CD8-positive, alpha-beta T cell (primary cell): ENCODE measurements at regions of chrX and their contacts with region 1.

Region 1: DNA sequence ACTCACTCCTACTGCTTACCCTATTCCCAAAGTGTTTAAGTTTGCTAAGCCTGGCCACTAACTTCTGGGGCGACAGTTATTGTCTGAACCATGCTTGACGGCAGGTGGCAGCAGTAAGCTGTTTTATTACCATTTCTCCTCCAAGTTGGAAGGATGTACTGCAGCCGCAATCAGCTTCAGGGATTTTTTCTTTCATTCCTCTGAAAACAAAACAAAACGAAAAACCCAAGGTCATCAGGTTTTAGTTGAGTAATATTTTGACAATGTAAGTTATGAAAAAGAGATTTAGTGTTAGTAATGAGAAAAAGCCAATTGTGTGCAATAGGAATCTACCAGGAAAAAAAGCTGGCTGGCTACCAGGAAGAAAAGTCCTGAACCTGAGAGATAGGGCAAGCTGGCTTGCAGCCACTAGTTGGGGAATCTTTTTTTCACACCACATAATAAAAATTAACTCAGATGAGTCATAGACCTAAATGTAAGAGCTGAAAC is 13.2 kb upstream of the RAB9B start:
- DNase-seq: peak in 7 of 9 experiments; percentile 20 to 62 (median 46)
- ATAC-seq: no peak
- H3K4me3 ChIP-seq: no peak overlapping the region
- H3K4me3 Mint-ChIP-seq: no peak overlapping the region
- H3K27ac ChIP-seq: no peak overlapping the region
- H3K27ac Mint-ChIP-seq: no peak overlapping the region
- H3K4me1 ChIP-seq: no peaks in the 10 kb centered on the region
- H3K4me1 Mint-ChIP-seq: no peaks in the 10 kb centered on the region
- H3K27me3 ChIP-seq: no peaks in the 10 kb centered on the region
- H3K27me3 Mint-ChIP-seq: peaks cover 5% of the 10 kb centered on the region
- CTCF ChIP-seq: peak; percentile 52

Region 2: GRCh38 chrX:103864886-103865534 is 19.8 kb after region 1 on chrX:
- CTCF ChIA-PET with region 1: no interaction called
- POLR2A ChIA-PET with region 1: no interaction called
- intact Hi-C with region 1: no loop called
- DNase-seq: no peak
- ATAC-seq: no peak
- H3K4me3 ChIP-seq: no peak overlapping the region
- H3K4me3 Mint-ChIP-seq: no peak overlapping the region
- H3K27ac ChIP-seq: no peak overlapping the region
- H3K27ac Mint-ChIP-seq: no peak overlapping the region
- H3K4me1 ChIP-seq: no peaks in the 10 kb centered on the region
- H3K4me1 Mint-ChIP-seq: no peaks in the 10 kb centered on the region
- H3K27me3 ChIP-seq: no peaks in the 10 kb centered on the region
- H3K27me3 Mint-ChIP-seq: no peaks in the 10 kb centered on the region
- CTCF ChIP-seq: no peak

Region 3: GRCh38 chrX:103918581-103919269 is 73.5 kb after region 1 on chrX:
- CTCF ChIA-PET with region 1: interaction called, 10 read pairs
- POLR2A ChIA-PET with region 1: no interaction called
- intact Hi-C with region 1: no loop called
- DNase-seq: peak; percentile 5 to 77 (median 48)
- ATAC-seq: peak; percentile 74
- H3K4me3 ChIP-seq: peak overlapping the region; percentile 62 to 71
- H3K4me3 Mint-ChIP-seq: peak overlapping the region; percentile 90
- H3K27ac ChIP-seq: peak overlapping the region; percentile 65 to 76
- H3K27ac Mint-ChIP-seq: peak overlapping the region; percentile 90
- H3K4me1 ChIP-seq: peaks cover 12% of the 10 kb centered on the region
- H3K4me1 Mint-ChIP-seq: peaks cover 29% of the 10 kb centered on the region
- H3K27me3 ChIP-seq: no peaks in the 10 kb centered on the region
- H3K27me3 Mint-ChIP-seq: no peaks in the 10 kb centered on the region
- CTCF ChIP-seq: no peak

Region 4: DNA sequence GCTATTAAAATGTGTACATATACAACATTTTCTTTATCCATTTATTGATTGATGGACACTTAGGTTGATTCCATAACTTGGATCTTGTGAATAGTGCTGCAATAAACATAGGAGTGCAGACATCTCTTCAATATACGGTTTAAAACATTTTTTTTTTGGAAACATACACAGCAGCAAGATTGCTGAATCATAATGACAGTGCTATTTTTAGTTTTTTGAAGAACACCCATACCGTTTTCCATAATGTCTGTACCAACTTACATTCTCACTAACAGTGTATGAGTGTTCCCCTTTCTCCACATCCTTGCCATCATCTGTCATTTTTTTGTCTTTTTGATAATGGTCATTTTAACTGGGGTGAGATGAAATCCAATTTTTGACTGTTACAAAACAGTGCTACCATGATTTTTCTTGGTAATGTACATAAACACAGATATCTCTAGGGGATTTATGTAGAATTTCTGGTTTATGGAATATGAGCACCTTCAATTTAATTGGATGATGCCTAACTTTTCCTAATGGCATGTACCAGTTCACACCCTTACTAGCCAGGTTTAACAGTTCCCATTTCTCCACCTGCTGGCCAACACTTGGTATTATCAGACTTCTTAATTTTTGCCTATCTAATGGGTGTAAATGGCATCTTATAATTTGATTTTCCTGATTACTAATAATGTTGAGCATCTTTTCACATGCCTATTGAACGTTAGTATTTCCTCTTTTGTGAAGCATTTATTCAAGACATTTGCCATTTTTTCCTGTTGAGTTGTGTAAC is 96.2 kb after region 1 on chrX:
- CTCF ChIA-PET with region 1: interaction called, 29 read pairs
- POLR2A ChIA-PET with region 1: no interaction called
- intact Hi-C with region 1: loop called (anchors 1 kb)
- DNase-seq: peak in 2 of 9 experiments; percentile 52 to 63
- ATAC-seq: no peak
- H3K4me3 ChIP-seq: no peak overlapping the region
- H3K4me3 Mint-ChIP-seq: no peak overlapping the region
- H3K27ac ChIP-seq: no peak overlapping the region
- H3K27ac Mint-ChIP-seq: no peak overlapping the region
- H3K4me1 ChIP-seq: peaks cover 10% of the 10 kb centered on the region
- H3K4me1 Mint-ChIP-seq: peaks cover 20% of the 10 kb centered on the region
- H3K27me3 ChIP-seq: no peaks in the 10 kb centered on the region
- H3K27me3 Mint-ChIP-seq: no peaks in the 10 kb centered on the region
- CTCF ChIP-seq: peak; percentile 39

Region 5: DNA sequence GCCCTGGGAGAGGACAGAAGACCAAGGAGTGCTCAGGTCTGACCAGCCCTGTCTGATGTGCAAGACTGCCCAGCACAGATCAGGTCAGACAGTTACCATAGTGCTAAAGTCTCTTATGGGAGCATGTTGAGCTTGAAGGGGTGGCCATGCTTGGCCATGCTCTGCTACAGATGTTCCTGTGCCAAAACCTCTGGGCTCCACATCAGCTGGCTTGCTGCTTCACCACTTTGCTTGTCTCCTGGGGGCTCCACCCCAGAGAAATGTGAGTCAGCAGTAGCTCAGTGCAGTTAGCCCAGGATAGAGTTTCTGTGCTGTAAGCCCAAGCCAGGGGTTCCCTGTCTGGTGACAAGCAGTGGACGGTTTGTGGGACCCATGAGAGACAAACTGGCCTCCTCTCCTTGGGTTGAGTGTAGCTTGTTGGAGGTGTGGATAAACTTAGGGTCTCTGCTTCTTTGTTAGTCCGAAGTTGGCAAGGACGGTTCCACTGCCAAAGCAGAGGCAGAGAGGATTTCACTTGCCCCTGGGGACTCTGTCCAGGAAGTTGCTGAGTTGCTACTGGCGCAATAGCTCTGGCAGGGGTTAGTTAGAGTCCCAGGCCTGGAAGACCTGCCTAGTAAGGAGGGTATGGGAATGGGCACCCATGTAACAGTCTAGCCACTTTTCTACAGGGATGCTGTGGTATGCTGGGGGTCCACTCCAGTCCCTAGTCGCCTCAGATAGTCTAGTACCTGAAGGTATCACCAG is 239.5 kb after region 1 on chrX:
- CTCF ChIA-PET with region 1: no interaction called
- POLR2A ChIA-PET with region 1: no interaction called
- intact Hi-C with region 1: no loop called
- DNase-seq: no peak
- ATAC-seq: no peak
- H3K4me3 ChIP-seq: no peak overlapping the region
- H3K4me3 Mint-ChIP-seq: no peak overlapping the region
- H3K27ac ChIP-seq: no peak overlapping the region
- H3K27ac Mint-ChIP-seq: no peak overlapping the region
- H3K4me1 ChIP-seq: no peaks in the 10 kb centered on the region
- H3K4me1 Mint-ChIP-seq: no peaks in the 10 kb centered on the region
- H3K27me3 ChIP-seq: no peaks in the 10 kb centered on the region
- H3K27me3 Mint-ChIP-seq: peaks cover 3% of the 10 kb centered on the region
- CTCF ChIP-seq: no peak

Region 6: GRCh38 chrX:104136241-104137019 is 291.2 kb after region 1 on chrX:
- CTCF ChIA-PET with region 1: interaction called, 3 read pairs
- POLR2A ChIA-PET with region 1: no interaction called
- intact Hi-C with region 1: loop called (anchors 1 to 2 kb)
- DNase-seq: peak in 8 of 9 experiments; percentile 32 to 82 (median 62)
- ATAC-seq: peak; percentile 70
- H3K4me3 ChIP-seq: no peak overlapping the region
- H3K4me3 Mint-ChIP-seq: peak overlapping the region; percentile 22
- H3K27ac ChIP-seq: no peak overlapping the region
- H3K27ac Mint-ChIP-seq: no peak overlapping the region
- H3K4me1 ChIP-seq: peaks cover 13% of the 10 kb centered on the region
- H3K4me1 Mint-ChIP-seq: peaks cover 28% of the 10 kb centered on the region
- H3K27me3 ChIP-seq: no peaks in the 10 kb centered on the region
- H3K27me3 Mint-ChIP-seq: no peaks in the 10 kb centered on the region
- CTCF ChIP-seq: peak; percentile 61

Region 7: DNA sequence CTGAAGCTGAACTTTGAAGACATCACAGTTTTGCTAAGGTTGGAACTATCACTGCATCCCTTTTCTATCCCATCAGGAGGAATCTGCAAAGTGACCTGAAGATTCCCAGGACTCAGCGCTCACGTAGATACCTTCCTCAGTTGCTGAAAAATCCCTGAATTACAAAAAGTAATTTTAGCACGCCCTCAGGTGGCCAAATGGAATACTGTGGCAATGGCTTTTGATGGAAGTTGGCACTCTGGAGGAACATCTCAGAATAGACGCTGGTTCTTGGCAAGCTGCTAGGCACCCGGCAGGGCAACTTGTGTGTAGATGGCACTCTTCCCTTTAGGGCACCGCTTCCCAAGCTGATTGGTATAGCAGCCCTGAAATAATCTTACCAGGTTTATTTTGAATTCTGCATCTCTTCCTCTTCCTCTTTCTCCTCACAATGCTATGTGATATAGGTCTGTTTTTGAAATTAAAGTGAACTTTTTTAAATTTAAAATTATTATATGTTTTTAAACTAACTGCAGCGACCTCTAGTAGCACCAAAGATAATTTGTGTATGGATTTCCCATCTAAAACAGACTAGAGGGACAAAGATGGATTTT is 425.8 kb after region 1 on chrX:
- CTCF ChIA-PET with region 1: no interaction called
- POLR2A ChIA-PET with region 1: no interaction called
- intact Hi-C with region 1: loop called in 1 of 2 experiments (anchors 5 kb)
- DNase-seq: peak in 6 of 9 experiments; percentile 1 to 29 (median 12)
- ATAC-seq: no peak
- H3K4me3 ChIP-seq: peak overlapping the region; percentile 28 to 35
- H3K4me3 Mint-ChIP-seq: peak overlapping the region; percentile 57
- H3K27ac ChIP-seq: no peak overlapping the region
- H3K27ac Mint-ChIP-seq: no peak overlapping the region
- H3K4me1 ChIP-seq: no peaks in the 10 kb centered on the region
- H3K4me1 Mint-ChIP-seq: peaks cover 3% of the 10 kb centered on the region
- H3K27me3 ChIP-seq: no peaks in the 10 kb centered on the region
- H3K27me3 Mint-ChIP-seq: peaks cover 18% of the 10 kb centered on the region
- CTCF ChIP-seq: peak; percentile 26

Region 8: GRCh38 chrX:104343428-104344129 is 498.4 kb after region 1 on chrX:
- CTCF ChIA-PET with region 1: no interaction called
- POLR2A ChIA-PET with region 1: no interaction called
- intact Hi-C with region 1: loop called in 1 of 2 experiments (anchors 10 kb)
- DNase-seq: peak in 5 of 9 experiments; percentile 0 to 60 (median 20)
- ATAC-seq: peak; percentile 36
- H3K4me3 ChIP-seq: no peak overlapping the region
- H3K4me3 Mint-ChIP-seq: no peak overlapping the region
- H3K27ac ChIP-seq: no peak overlapping the region
- H3K27ac Mint-ChIP-seq: no peak overlapping the region
- H3K4me1 ChIP-seq: no peaks in the 10 kb centered on the region
- H3K4me1 Mint-ChIP-seq: no peaks in the 10 kb centered on the region
- H3K27me3 ChIP-seq: no peaks in the 10 kb centered on the region
- H3K27me3 Mint-ChIP-seq: no peaks in the 10 kb centered on the region
- CTCF ChIP-seq: peak; percentile 25

Region 9: GRCh38 chrX:104922206-104922621 is 1077.0 kb after region 1 on chrX:
- CTCF ChIA-PET with region 1: no interaction called
- POLR2A ChIA-PET with region 1: no interaction called
- intact Hi-C with region 1: loop called in 1 of 2 experiments (anchors 10 kb)
- DNase-seq: peak; percentile 16 to 72 (median 54)
- ATAC-seq: peak; percentile 99
- H3K4me3 ChIP-seq: no peak overlapping the region
- H3K4me3 Mint-ChIP-seq: no peak overlapping the region
- H3K27ac ChIP-seq: no peak overlapping the region
- H3K27ac Mint-ChIP-seq: no peak overlapping the region
- H3K4me1 ChIP-seq: no peaks in the 10 kb centered on the region
- H3K4me1 Mint-ChIP-seq: no peaks in the 10 kb centered on the region
- H3K27me3 ChIP-seq: no peaks in the 10 kb centered on the region
- H3K27me3 Mint-ChIP-seq: no peaks in the 10 kb centered on the region
- CTCF ChIP-seq: peak; percentile 71